Endothelial cell of umbilical vein (primary cell): ENCODE measurements at regions of chr10 and their contacts with region 1.

Region 1: GRCh38 chr10:61628875-61629513 is 33.7 kb upstream of the CABCOCO1 start:
- DNase-seq: peak; percentile 55
- H3K4me3 ChIP-seq: no peak overlapping the region
- H3K27ac ChIP-seq: peak overlapping the region; percentile 22
- H3K4me1 ChIP-seq: peaks cover 18% of the 10 kb centered on the region
- H3K27me3 ChIP-seq: no peaks in the 10 kb centered on the region
- CTCF ChIP-seq: no peak
- POLR2A ChIP-seq: no peak

Region 2: GRCh38 chr10:61475449-61475873 is 153.5 kb before region 1 on chr10:
- CTCF ChIA-PET with region 1: no interaction called
- POLR2A ChIA-PET with region 1: no interaction called
- dilution Hi-C with region 1: no loop called
- intact Hi-C with region 1: loop called (anchors 10 kb)
- DNase-seq: peak; percentile 94
- H3K4me3 ChIP-seq: no peak overlapping the region
- H3K27ac ChIP-seq: peak overlapping the region; percentile 55
- H3K4me1 ChIP-seq: peaks cover 26% of the 10 kb centered on the region
- H3K27me3 ChIP-seq: no peaks in the 10 kb centered on the region
- CTCF ChIP-seq: no peak
- POLR2A ChIP-seq: no peak

Region 3: DNA sequence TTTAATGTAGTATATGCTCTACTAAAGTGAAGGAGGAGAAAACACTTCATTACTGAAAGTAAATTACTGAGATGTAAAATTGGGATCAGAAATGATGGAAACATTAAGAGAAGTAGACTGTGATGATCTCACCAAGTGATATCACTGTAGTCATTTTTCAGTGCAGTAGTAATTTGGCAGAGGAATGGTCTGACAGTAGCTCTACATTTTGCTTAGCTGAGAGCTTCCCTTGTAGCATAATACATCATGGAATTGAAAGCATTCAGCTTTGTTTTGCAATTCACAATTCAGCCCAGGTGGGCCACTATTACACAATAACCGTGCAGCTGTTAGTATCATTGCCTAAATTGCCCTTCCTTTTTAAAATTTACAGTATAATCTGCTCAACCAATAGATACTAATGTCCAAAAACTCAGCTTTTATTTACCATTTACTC is 14.3 kb after region 1 on chr10:
- CTCF ChIA-PET with region 1: interaction called, 5 read pairs
- POLR2A ChIA-PET with region 1: no interaction called
- dilution Hi-C with region 1: no loop called
- intact Hi-C with region 1: loop called (anchors 1 kb)
- DNase-seq: peak; percentile 43
- H3K4me3 ChIP-seq: no peak overlapping the region
- H3K27ac ChIP-seq: peak overlapping the region; percentile 50
- H3K4me1 ChIP-seq: peaks cover 18% of the 10 kb centered on the region
- H3K27me3 ChIP-seq: no peaks in the 10 kb centered on the region
- CTCF ChIP-seq: no peak
- POLR2A ChIP-seq: no peak

Region 4: DNA sequence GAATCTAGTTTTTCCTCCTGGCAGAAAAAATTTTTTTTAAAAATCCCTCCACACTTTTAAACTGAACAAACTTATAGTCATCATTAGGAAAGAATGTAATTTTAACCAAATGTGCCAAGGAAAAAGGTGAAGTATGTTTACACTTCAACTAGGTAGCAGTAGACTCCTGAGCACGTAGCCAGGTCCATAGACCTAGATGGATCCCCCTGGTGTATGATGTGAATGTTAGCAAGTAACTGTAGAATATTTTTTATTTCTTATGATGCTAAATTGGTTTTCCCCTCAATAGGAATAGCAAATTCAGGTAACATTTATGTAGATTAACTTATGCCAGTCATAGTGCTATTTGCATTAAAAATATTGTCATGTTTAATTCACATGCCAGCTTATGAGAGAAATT is 53.3 kb after region 1 on chr10:
- CTCF ChIA-PET with region 1: no interaction called
- POLR2A ChIA-PET with region 1: no interaction called
- dilution Hi-C with region 1: no loop called
- intact Hi-C with region 1: no loop called
- DNase-seq: no peak
- H3K4me3 ChIP-seq: no peak overlapping the region
- H3K27ac ChIP-seq: no peak overlapping the region
- H3K4me1 ChIP-seq: no peaks in the 10 kb centered on the region
- H3K27me3 ChIP-seq: no peaks in the 10 kb centered on the region
- CTCF ChIP-seq: no peak
- POLR2A ChIP-seq: no peak

Region 5: GRCh38 chr10:62742536-62743061 is 1113.6 kb after region 1 on chr10:
- CTCF ChIA-PET with region 1: no interaction called
- POLR2A ChIA-PET with region 1: no interaction called
- dilution Hi-C with region 1: no loop called
- intact Hi-C with region 1: no loop called
- DNase-seq: no peak
- H3K4me3 ChIP-seq: no peak overlapping the region
- H3K27ac ChIP-seq: no peak overlapping the region
- H3K4me1 ChIP-seq: no peaks in the 10 kb centered on the region
- H3K27me3 ChIP-seq: peaks cover 0 to 3% of the 10 kb centered on the region in 2 experiments
- CTCF ChIP-seq: no peak
- POLR2A ChIP-seq: no peak